ENCODE measurements at regions of chrX and their contacts with region 1.

Region 1: GRCh38 chrX:40153335-40154249 is 55.8 kb upstream of the BCOR start:
- DNase-seq: peak; percentile 68
- ATAC-seq: peak; percentile 53
- H3K4me3 Mint-ChIP-seq: peak overlapping the region; percentile 85
- H3K27ac Mint-ChIP-seq: peak overlapping the region; percentile 67
- H3K4me1 Mint-ChIP-seq: peaks cover 6% of the 10 kb centered on the region
- H3K27me3 Mint-ChIP-seq: no peaks in the 10 kb centered on the region

Region 2: GRCh38 chrX:40108959-40109287 is 44.7 kb before region 1 on chrX:
- POLR2A ChIA-PET with region 1: interaction called, 12 read pairs
- DNase-seq: peak; percentile 71
- ATAC-seq: peak; percentile 41
- H3K4me3 Mint-ChIP-seq: peak overlapping the region; percentile 66
- H3K27ac Mint-ChIP-seq: no peak overlapping the region
- H3K4me1 Mint-ChIP-seq: peaks cover 6% of the 10 kb centered on the region
- H3K27me3 Mint-ChIP-seq: no peaks in the 10 kb centered on the region

Region 3: DNA sequence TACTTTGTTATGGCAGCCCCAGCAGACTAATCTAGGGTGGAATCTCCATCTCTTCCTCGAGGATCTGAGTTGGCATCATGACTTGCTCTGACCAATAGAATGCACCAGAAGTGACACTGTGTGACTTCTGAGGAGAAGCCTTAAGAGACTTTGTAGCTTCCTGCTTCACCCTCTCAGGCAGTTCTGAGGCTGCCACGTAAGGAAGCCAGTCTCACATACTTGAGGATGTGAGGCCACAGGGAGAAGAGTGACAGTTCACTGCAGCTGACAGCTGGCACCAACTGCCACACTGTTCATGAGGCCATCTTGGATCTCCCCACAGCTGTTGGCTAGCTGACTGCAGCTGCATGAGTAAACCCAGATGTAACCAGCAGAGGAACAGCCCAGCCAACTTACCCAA is 26.5 kb before region 1 on chrX:
- POLR2A ChIA-PET with region 1: interaction called, 13 read pairs
- DNase-seq: no peak
- ATAC-seq: peak; percentile 99
- H3K4me3 Mint-ChIP-seq: peak overlapping the region; percentile 62
- H3K27ac Mint-ChIP-seq: peak overlapping the region; percentile 92
- H3K4me1 Mint-ChIP-seq: peaks cover 7% of the 10 kb centered on the region
- H3K27me3 Mint-ChIP-seq: no peaks in the 10 kb centered on the region

Region 4: GRCh38 chrX:40209951-40210617 is 56.5 kb after region 1 on chrX:
- POLR2A ChIA-PET with region 1: no interaction called
- DNase-seq: no peak
- ATAC-seq: no peak
- H3K4me3 Mint-ChIP-seq: no peak overlapping the region
- H3K27ac Mint-ChIP-seq: no peak overlapping the region
- H3K4me1 Mint-ChIP-seq: peaks cover 8% of the 10 kb centered on the region
- H3K27me3 Mint-ChIP-seq: peaks cover 2% of the 10 kb centered on the region

Region 5: GRCh38 chrX:40326186-40326965 is 172.8 kb after region 1 on chrX:
- POLR2A ChIA-PET with region 1: no interaction called
- DNase-seq: no peak
- ATAC-seq: no peak
- H3K4me3 Mint-ChIP-seq: no peak overlapping the region
- H3K27ac Mint-ChIP-seq: no peak overlapping the region
- H3K4me1 Mint-ChIP-seq: no peaks in the 10 kb centered on the region
- H3K27me3 Mint-ChIP-seq: peaks cover 3% of the 10 kb centered on the region

Measured in activated naive CD8-positive, alpha-beta T cell treated with anti-CD3 and anti-CD28 coated beads, Interleukin-2, amount 10 ng/mL, durations not matched to agents 7 days and 5 days (primary cell).